Mammary epithelial cell (primary cell): ENCODE measurements at regions of chr11 and their contacts with region 1.

Region 1: DNA sequence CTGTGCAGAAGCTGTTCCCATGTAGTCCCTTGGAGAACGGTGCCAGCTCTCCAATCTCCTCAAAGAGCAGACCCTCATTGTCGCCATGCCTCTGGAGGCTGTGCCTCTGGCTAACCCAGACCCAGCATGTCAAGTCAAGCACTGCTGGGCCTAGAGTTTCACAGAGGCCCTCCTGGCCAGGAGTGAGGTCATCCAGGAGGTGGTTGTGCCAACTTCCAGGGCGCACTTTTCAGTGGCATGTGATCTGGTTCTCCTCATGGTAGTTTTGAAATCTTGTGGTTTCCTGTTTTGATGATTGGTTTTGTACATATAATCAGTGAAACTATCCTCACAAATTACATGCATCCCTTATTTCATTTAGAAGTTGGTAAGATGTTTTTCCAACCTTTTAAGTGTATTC is 78.9 kb downstream of the PPFIBP2 start:
- DNase-seq: peak; percentile 95
- H3K4me3 ChIP-seq: no peak overlapping the region
- H3K27ac ChIP-seq: peak overlapping the region; percentile 71
- H3K4me1 ChIP-seq: peaks cover 73% of the 10 kb centered on the region
- H3K27me3 ChIP-seq: no peaks in the 10 kb centered on the region
- CTCF ChIP-seq: no peak

Region 2: GRCh38 chr11:6889835-6890234 is 702.9 kb before region 1 on chr11:
- CTCF ChIA-PET with region 1: no interaction called
- dilution Hi-C with region 1: no loop called
- in situ Hi-C with region 1: no loop called
- intact Hi-C with region 1: no loop called
- DNase-seq: no peak
- H3K4me3 ChIP-seq: no peak overlapping the region
- H3K27ac ChIP-seq: no peak overlapping the region
- H3K4me1 ChIP-seq: no peaks in the 10 kb centered on the region
- H3K27me3 ChIP-seq: no peaks in the 10 kb centered on the region
- CTCF ChIP-seq: no peak

Region 3: DNA sequence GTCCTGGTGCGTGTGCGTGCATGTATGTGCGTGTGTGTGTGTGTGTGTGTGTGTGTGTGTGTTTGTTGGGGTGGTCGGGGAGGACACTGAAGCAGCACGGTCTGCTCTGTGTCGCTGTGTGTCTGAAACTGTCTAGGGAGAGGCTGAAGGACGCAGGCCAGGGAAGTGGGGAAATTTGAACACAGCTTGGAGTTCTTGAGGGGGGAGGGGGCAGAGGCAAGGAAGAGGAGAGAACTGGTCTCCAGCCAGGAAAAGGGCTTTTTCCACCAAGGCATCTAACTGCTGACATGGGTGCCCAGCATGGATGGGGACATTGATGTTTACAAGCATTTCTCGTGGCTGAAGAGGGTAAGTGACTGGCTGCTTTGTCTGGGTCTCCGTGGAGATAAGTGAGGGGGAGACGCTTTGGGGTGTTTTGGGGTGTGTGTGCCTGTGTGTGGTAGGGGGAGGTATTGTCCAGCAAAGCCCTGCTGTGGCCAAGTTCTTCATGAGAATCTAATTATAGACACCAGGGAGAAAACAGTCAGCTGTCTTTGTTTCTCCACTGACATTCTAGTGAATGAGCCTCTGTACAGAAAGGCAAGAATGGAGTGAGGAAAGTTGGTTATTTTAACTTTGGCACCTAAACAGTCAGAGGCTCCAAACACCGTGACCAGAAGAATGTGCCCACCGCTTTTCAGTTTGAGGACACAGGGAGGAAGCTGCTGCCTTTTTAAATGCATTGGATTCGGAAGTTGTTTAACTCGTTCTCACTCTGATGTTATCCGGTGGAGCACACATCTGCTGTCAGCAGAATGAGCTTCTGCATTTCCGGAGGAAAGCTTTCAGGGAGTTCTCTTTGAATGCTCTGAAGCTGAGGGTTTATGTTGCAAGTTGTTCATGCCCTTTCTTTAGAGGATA is 15.2 kb before region 1 on chr11:
- CTCF ChIA-PET with region 1: interaction called, 3 read pairs
- dilution Hi-C with region 1: no loop called
- in situ Hi-C with region 1: no loop called
- intact Hi-C with region 1: loop called (anchors 1 kb)
- DNase-seq: no peak
- H3K4me3 ChIP-seq: no peak overlapping the region
- H3K27ac ChIP-seq: no peak overlapping the region
- H3K4me1 ChIP-seq: peaks cover 31% of the 10 kb centered on the region
- H3K27me3 ChIP-seq: no peaks in the 10 kb centered on the region
- CTCF ChIP-seq: no peak

Region 4: DNA sequence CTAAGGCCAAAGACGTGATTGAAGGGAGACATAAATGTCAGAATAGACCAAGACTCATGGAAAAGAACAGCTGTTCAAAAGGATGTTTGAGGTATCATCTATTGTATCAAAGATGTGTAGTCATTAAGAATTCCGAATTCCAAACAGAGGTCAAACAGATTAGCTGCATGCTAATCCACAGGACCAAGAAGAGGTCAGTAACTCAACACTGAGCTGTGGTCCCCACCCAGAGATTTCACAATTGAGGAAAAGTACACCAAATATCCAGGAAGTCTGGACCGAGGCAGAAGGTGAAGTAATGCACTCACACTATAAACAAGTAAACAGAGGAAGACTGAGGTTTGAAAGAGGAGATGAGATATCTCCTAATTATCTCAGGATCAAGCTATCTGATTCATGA is 233.6 kb after region 1 on chr11:
- CTCF ChIA-PET with region 1: no interaction called
- dilution Hi-C with region 1: no loop called
- in situ Hi-C with region 1: no loop called
- intact Hi-C with region 1: no loop called
- DNase-seq: no peak
- H3K4me3 ChIP-seq: no peak overlapping the region
- H3K27ac ChIP-seq: no peak overlapping the region
- H3K4me1 ChIP-seq: no peaks in the 10 kb centered on the region
- H3K27me3 ChIP-seq: no peaks in the 10 kb centered on the region
- CTCF ChIP-seq: no peak